ENCODE measurements at regions of chr7 and their contacts with region 1.

Region 1: DNA sequence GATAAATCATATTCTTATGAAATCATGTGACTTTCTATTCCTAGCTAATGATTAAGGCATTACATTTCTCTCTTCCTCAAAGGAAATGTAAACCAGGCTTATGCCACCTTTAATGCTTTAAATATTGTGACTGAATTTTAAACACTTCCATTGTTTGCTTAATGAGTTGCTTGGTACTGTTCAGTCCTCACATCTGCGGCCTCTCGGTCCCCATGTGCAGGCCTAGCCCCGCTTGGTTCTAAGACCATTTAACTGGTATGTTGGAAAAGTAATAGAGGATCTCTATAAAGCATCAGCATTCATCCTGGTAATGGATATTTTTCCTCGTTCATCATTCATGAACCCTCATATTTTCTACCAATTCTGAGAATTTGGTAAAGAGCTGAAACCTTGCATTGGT is 27.4 kb downstream of the THSD7A start:
- DNase-seq: no peak
- H3K4me3 ChIP-seq: no peak overlapping the region
- H3K27ac ChIP-seq: no peak overlapping the region
- H3K4me1 ChIP-seq: no peaks in the 10 kb centered on the region
- H3K27me3 ChIP-seq: no peaks in the 10 kb centered on the region
- CTCF ChIP-seq: no peak

Region 2: DNA sequence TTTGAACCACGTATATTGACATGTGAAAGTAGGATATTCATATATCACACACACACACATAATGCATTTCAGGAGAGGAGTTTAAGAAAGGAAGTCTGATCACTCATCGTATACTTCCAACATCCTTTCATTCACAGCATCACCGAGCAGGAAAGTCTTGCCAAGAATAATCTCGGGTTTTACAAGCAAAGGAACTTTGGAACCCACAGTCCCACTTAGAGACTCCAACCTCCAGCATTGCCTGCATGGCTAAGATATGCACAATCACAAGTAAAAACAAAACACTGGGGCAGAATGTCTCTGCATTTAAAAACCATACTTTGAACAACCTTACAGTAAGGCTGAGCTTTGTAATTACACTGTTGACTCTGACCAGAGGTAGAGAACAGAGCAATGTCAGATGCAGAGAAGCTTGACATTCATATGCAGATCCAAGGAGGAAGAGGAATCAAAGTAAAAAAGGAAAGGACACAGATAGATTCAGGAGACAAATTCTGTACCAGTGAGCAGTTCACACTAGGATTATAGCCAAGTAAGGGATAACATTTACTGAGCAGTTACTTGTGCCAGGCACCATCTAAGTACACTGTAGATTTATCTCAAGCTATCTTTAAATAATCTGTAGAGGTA is 12.6 kb after region 1 on chr7:
- CTCF ChIA-PET with region 1: no interaction called
- POLR2A ChIA-PET with region 1: no interaction called
- intact Hi-C with region 1: loop called (anchors 2 kb)
- DNase-seq: no peak
- H3K4me3 ChIP-seq: no peak overlapping the region
- H3K27ac ChIP-seq: no peak overlapping the region
- H3K4me1 ChIP-seq: no peaks in the 10 kb centered on the region
- H3K27me3 ChIP-seq: no peaks in the 10 kb centered on the region
- CTCF ChIP-seq: no peak